BJ (cell line): ENCODE measurements at regions of chr2 and their contacts with region 1.

Region 1: GRCh38 chr2:60527762-60528161 is 25.7 kb downstream of the BCL11A start:
- DNase-seq: no peak
- H3K4me3 ChIP-seq: no peak overlapping the region
- H3K27me3 ChIP-seq: no peaks in the 10 kb centered on the region
- CTCF ChIP-seq: no peak

Region 2: DNA sequence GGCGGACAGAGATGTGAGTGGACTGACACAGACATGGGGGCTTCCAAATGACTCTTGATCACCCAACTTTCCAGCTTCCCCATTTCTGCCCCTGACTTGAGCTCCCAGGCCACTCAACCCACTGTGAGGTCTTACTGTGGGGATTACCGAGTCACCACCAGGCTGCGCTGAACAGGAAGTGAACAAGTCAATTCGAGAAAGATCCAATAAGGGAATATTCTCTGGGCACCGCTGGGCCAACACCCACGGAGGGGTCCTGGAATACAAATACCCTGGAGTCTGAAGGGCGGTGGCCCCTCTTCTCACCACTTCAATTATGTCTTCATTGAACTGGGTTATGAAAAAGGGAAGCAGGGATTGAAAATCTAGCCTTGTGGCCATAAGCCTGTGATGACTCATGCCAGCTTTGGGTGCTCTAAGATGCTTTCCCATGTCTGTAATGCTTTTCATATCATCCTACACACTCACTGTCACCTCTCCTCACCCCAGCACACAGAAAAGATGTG is 12.0 kb before region 1 on chr2:
- CTCF ChIA-PET with region 1: interaction called, 11 read pairs
- POLR2A ChIA-PET with region 1: interaction called, 8 read pairs
- DNase-seq: peak; percentile 49
- H3K4me3 ChIP-seq: no peak overlapping the region
- H3K27me3 ChIP-seq: no peaks in the 10 kb centered on the region
- CTCF ChIP-seq: peak; percentile 26; the same call in 1 of the 2 replicates

Region 3: GRCh38 chr2:60634438-60634837 is 106.7 kb after region 1 on chr2:
- CTCF ChIA-PET with region 1: no interaction called
- POLR2A ChIA-PET with region 1: no interaction called
- DNase-seq: no peak
- H3K4me3 ChIP-seq: no peak overlapping the region
- H3K27me3 ChIP-seq: peaks cover 2% of the 10 kb centered on the region; the same call in 1 of the 2 replicates
- CTCF ChIP-seq: no peak